Sigmoid colon (tissue), 7 donors: ENCODE measurements at regions of chr6 and their contacts with region 1.

Region 1: DNA sequence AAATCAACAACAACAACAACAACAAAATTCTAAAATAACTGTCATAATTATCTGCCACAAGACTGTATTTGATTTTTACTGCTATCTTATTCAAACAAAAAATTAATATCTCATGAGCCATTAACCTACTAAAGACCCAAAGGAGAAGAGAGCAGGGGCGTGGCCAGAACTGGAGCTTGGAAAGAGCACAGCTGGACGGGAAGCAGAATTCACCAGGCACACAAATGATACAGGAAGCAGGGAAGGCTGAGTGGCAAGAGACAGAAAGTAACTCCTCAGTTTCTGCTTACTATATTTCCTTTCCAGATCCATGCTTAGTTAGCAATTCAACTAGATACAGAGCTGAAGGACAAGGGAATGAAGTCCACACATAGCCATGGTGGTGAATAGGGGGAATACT is 54.4 kb downstream of the FKBP5 start:
- DNase-seq: no peak
- H3K4me3 ChIP-seq: no peak overlapping the region
- H3K27ac ChIP-seq: peak overlapping the region in 1 of 4 donors; percentile 2
- H3K4me1 ChIP-seq: no peaks in the 10 kb centered on the region
- H3K27me3 ChIP-seq: no peaks in the 10 kb centered on the region
- CTCF ChIP-seq: no peak
- EP300 ChIP-seq: no peak
- POLR2A ChIP-seq: no peak

Region 2: GRCh38 chr6:35590622-35591066 is 43.7 kb before region 1 on chr6:
- intact Hi-C with region 1: no loop called
- DNase-seq: peak; percentile 95
- H3K4me3 ChIP-seq: no peak overlapping the region
- H3K27ac ChIP-seq: peak overlapping the region; percentile 81 to 94 (median 86)
- H3K4me1 ChIP-seq: peaks cover 0 to 99% (median 93%) of the 10 kb centered on the region in 4 donors
- H3K27me3 ChIP-seq: no peaks in the 10 kb centered on the region
- CTCF ChIP-seq: no peak
- EP300 ChIP-seq: peak; percentile 77 to 96 (median 82)
- POLR2A ChIP-seq: no peak

Region 3: GRCh38 chr6:35669451-35670045 is 35.2 kb after region 1 on chr6:
- intact Hi-C with region 1: loop called (anchors 5 kb)
- DNase-seq: no peak
- H3K4me3 ChIP-seq: no peak overlapping the region
- H3K27ac ChIP-seq: peak overlapping the region in 1 of 4 donors; percentile 12
- H3K4me1 ChIP-seq: peaks cover 0 to 42% (median 37%) of the 10 kb centered on the region in 4 donors
- H3K27me3 ChIP-seq: no peaks in the 10 kb centered on the region
- CTCF ChIP-seq: no peak
- EP300 ChIP-seq: no peak
- POLR2A ChIP-seq: no peak

Region 4: DNA sequence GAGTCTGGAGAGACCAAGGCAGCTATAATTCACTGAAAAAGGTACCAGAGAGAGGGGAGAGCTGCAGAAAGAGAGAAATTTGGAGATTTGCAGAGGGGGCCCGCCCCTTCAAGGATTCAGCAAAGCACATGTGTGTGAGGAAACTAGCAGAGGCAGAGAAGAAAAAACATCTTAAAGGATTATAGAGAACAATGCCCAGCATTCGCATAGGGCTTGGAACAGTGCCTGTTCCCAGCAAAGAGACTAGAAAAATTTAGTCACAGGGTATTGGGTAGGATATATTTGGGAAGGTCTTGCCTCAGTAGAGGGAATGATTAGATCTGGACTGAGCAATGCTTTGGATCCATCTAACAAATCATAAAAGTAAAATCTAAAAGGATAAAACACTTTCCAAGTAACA is 242.6 kb after region 1 on chr6:
- intact Hi-C with region 1: loop called (anchors 10 kb)
- DNase-seq: no peak
- H3K4me3 ChIP-seq: no peak overlapping the region
- H3K27ac ChIP-seq: no peak overlapping the region
- H3K4me1 ChIP-seq: no peaks in the 10 kb centered on the region
- H3K27me3 ChIP-seq: no peaks in the 10 kb centered on the region
- CTCF ChIP-seq: no peak
- EP300 ChIP-seq: no peak
- POLR2A ChIP-seq: no peak